ENCODE measurements at regions of chr3 and their contacts with region 1.

Region 1: DNA sequence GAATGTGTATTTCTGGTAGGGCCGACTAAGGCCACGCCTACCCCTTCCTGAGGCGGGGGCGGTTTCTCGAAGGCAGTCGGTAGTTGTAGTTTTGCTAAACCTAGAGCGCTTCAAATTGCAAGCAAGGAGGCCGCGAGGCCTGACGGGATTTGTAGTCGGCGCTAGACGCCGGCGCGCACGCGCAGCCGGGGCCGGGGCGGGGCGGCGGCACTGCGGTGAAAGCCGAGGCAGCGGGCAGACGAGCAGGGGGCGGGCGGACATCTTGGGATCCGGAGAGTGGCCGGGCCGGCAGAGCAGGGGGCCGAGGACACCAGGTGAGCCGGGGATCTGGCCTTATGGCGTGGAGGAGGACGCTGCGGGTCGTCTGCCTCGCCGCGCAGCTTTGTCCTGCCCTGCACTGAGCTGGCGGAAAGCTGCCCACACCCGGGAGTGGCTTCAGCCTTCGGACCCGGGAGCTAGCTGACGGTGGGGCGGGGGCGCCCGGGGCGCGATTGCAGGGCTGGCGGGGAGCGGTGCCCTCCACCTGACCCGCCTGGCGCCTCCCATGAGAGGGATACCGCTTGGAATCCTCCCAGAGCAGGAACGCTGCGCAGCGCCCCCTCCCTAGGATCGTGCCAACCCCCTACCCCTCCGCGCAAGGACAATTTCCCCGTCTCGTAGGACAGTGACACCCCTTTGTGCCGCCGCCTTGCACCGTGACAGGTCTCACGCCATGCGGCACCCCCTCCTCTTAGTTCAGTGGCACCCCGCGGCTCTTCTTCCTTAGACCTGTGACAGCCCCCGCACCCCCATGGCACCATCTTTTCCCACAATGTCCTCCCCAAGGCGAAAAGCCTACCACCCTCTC is at the start of gene AP2M1:
- DNase-seq: peak; percentile 99
- H3K4me3 ChIP-seq: peak within 1 kb of the TSS; percentile 87 to 99 (median 94)
- H3K27ac ChIP-seq: peak within 1 kb of the TSS; percentile 93 to 98 (median 96)
- H3K4me1 ChIP-seq: peaks cover 0 to 43% (median 38%) of the 10 kb centered on the region in 4 donors
- H3K27me3 ChIP-seq: no peaks in the 10 kb centered on the region
- CTCF ChIP-seq: no peak
- EP300 ChIP-seq: no peak
- POLR2A ChIP-seq: peak; percentile 70 to 77
- total RNA-seq, gene AP2M1: 203 to 239 (median 225) TPM

Region 2: GRCh38 chr3:184154885-184155643 is 19.8 kb before region 1 on chr3 and contains the start of gene DVL3:
- intact Hi-C with region 1: loop called (anchors 2 kb)
- DNase-seq: peak; percentile 81
- H3K4me3 ChIP-seq: peak within 1 kb of the TSS; percentile 67 to 94 (median 80)
- H3K27ac ChIP-seq: peak within 1 kb of the TSS; percentile 91 to 97 (median 94)
- H3K4me1 ChIP-seq: peaks cover 0 to 52% (median 47%) of the 10 kb centered on the region in 4 donors
- H3K27me3 ChIP-seq: no peaks in the 10 kb centered on the region
- CTCF ChIP-seq: no peak
- EP300 ChIP-seq: no peak
- POLR2A ChIP-seq: no peak
- total RNA-seq, gene DVL3: 38.5 to 71.2 (median 53.9) TPM

Region 3: GRCh38 chr3:184185461-184186308 is 10.8 kb after region 1 on chr3 and contains the start of gene ABCF3:
- intact Hi-C with region 1: loop called (anchors 1 kb)
- DNase-seq: peak; percentile 100
- H3K4me3 ChIP-seq: peak within 1 kb of the TSS; percentile 71 to 98 (median 96)
- H3K27ac ChIP-seq: peak within 1 kb of the TSS; percentile 87 to 90 (median 88)
- H3K4me1 ChIP-seq: peaks cover 0 to 37% (median 29%) of the 10 kb centered on the region in 4 donors
- H3K27me3 ChIP-seq: no peaks in the 10 kb centered on the region
- CTCF ChIP-seq: no peak
- EP300 ChIP-seq: peak in 1 of 4 donors; percentile 48
- POLR2A ChIP-seq: peak; percentile 62 to 84
- total RNA-seq, gene ABCF3: 32.4 to 51.3 (median 39.2) TPM

Measured in sigmoid colon (tissue), 7 donors.